PC-3 (cell line): ENCODE measurements at regions of chr5 and their contacts with region 1.

Region 1: GRCh38 chr5:179044765-179045164 is 15.4 kb upstream of the ZNF354C start:
- DNase-seq: no peak
- ATAC-seq: no peak
- H3K4me3 ChIP-seq: no peak overlapping the region
- H3K27ac ChIP-seq: no peak overlapping the region
- H3K4me1 ChIP-seq: no peaks in the 10 kb centered on the region
- H3K27me3 ChIP-seq: no peaks in the 10 kb centered on the region
- CTCF ChIP-seq: no peak

Region 2: GRCh38 chr5:179023528-179024430 is 21.0 kb before region 1 on chr5 and contains the start of gene ZNF879:
- CTCF ChIA-PET with region 1: no interaction called
- POLR2A ChIA-PET with region 1: no interaction called
- intact Hi-C with region 1: no loop called
- DNase-seq: peak; percentile 77
- ATAC-seq: peak; percentile 86
- H3K4me3 ChIP-seq: peak within 1 kb of the TSS; percentile 65
- H3K27ac ChIP-seq: no peak within 1 kb of the TSS
- H3K4me1 ChIP-seq: no peaks in the 10 kb centered on the region
- H3K27me3 ChIP-seq: no peaks in the 10 kb centered on the region
- CTCF ChIP-seq: no peak
- total RNA-seq, gene ZNF879: not detected in 2 replicates

Region 3: GRCh38 chr5:179060116-179061008 is 15.6 kb after region 1 on chr5 and contains the start of gene ZNF354C:
- CTCF ChIA-PET with region 1: no interaction called
- POLR2A ChIA-PET with region 1: interaction called, 15 read pairs
- intact Hi-C with region 1: no loop called
- DNase-seq: no peak
- ATAC-seq: no peak
- H3K4me3 ChIP-seq: no peak within 1 kb of the TSS
- H3K27ac ChIP-seq: no peak within 1 kb of the TSS
- H3K4me1 ChIP-seq: no peaks in the 10 kb centered on the region
- H3K27me3 ChIP-seq: no peaks in the 10 kb centered on the region
- CTCF ChIP-seq: no peak
- total RNA-seq, gene ZNF354C: not detected in 2 replicates

Region 4: GRCh38 chr5:179212870-179213269 is 168.1 kb after region 1 on chr5:
- CTCF ChIA-PET with region 1: no interaction called
- POLR2A ChIA-PET with region 1: no interaction called
- intact Hi-C with region 1: no loop called
- DNase-seq: no peak
- ATAC-seq: no peak
- H3K4me3 ChIP-seq: no peak overlapping the region
- H3K27ac ChIP-seq: no peak overlapping the region
- H3K4me1 ChIP-seq: peaks cover 6% of the 10 kb centered on the region; the same call in 1 of the 2 replicates
- H3K27me3 ChIP-seq: no peaks in the 10 kb centered on the region; the same call in 1 of the 2 replicates
- CTCF ChIP-seq: peak; percentile 30; the same call in 1 of the 2 replicates